ENCODE measurements at regions of chr12 and their contacts with region 1.

Region 1: GRCh38 chr12:120904197-120904773 is at the start of gene SPPL3:
- DNase-seq: peak; percentile 86 to 96 (median 93)
- ATAC-seq: peak; percentile 75
- H3K4me3 ChIP-seq: peak within 1 kb of the TSS; percentile 76 to 82
- H3K4me3 Mint-ChIP-seq: peak within 1 kb of the TSS; percentile 99
- H3K27ac ChIP-seq: peak within 1 kb of the TSS; percentile 66 to 84
- H3K27ac Mint-ChIP-seq: peak within 1 kb of the TSS; percentile 98
- H3K4me1 ChIP-seq: peaks cover 21% of the 10 kb centered on the region
- H3K4me1 Mint-ChIP-seq: peaks cover 32% of the 10 kb centered on the region
- H3K27me3 ChIP-seq: no peaks in the 10 kb centered on the region
- H3K27me3 Mint-ChIP-seq: no peaks in the 10 kb centered on the region
- CTCF ChIP-seq: no peak
- total RNA-seq, gene SPPL3: 42.3 to 42.9 TPM

Region 2: DNA sequence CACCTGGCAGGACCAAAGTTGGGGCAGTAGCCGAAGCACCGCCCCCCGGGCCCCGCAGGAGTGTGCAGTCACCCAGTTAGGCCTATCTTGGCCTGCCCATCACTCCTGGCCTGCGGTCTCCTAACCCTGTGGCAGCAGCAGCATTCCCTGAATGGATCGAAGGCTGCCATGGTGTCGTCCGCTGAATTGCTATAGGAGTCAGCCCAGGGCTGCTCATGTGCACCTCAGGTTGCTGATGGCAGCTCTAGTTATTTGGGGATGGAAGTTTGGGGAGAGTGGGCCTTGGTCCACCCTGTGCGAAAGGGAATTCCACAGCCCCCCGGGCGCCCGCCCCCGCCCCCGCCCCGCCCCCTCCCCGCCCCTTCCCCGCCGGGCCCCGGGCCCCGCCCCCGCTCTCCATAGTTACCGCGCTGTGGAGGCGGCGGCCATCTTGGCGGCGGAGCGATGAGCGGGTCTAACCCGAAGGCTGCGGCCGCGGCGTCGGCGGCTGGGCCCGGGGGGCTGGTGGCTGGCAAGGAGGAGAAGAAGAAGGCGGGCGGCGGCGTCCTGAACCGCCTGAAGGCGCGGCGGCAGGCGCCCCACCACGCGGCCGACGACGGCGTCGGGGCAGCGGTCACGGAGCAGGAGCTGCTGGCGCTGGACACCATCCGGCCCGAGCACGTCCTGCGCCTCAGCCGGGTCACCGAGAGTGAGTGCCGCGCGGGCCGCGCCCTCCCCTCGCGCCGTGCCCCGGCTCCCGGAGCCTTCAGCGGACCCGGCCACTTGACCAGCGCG is 194.1 kb before region 1 on chr12 and contains the start of gene UNC119B:
- CTCF ChIA-PET with region 1: no interaction called
- POLR2A ChIA-PET with region 1: no interaction called
- intact Hi-C with region 1: loop called in 1 of 2 experiments (anchors 10 kb)
- DNase-seq: peak; percentile 38 to 85 (median 77)
- ATAC-seq: peak; percentile 88
- H3K4me3 ChIP-seq: peak within 1 kb of the TSS; percentile 64 to 68
- H3K4me3 Mint-ChIP-seq: peak within 1 kb of the TSS; percentile 93
- H3K27ac ChIP-seq: peak within 1 kb of the TSS; percentile 40 to 70
- H3K27ac Mint-ChIP-seq: peak within 1 kb of the TSS; percentile 89
- H3K4me1 ChIP-seq: peaks cover 22% of the 10 kb centered on the region
- H3K4me1 Mint-ChIP-seq: peaks cover 37% of the 10 kb centered on the region
- H3K27me3 ChIP-seq: no peaks in the 10 kb centered on the region
- H3K27me3 Mint-ChIP-seq: no peaks in the 10 kb centered on the region
- CTCF ChIP-seq: no peak
- total RNA-seq, gene UNC119B: 8.1 to 8.4 TPM

Region 3: GRCh38 chr12:120856980-120857379 is 47.3 kb before region 1 on chr12:
- CTCF ChIA-PET with region 1: no interaction called
- POLR2A ChIA-PET with region 1: no interaction called
- intact Hi-C with region 1: loop called in 1 of 2 experiments (anchors 2 kb)
- DNase-seq: peak in 2 of 9 experiments; percentile 32 to 55
- ATAC-seq: no peak
- H3K4me3 ChIP-seq: no peak overlapping the region
- H3K4me3 Mint-ChIP-seq: no peak overlapping the region
- H3K27ac ChIP-seq: no peak overlapping the region
- H3K27ac Mint-ChIP-seq: peak overlapping the region; percentile 56
- H3K4me1 ChIP-seq: peaks cover 26% of the 10 kb centered on the region
- H3K4me1 Mint-ChIP-seq: peaks cover 63% of the 10 kb centered on the region
- H3K27me3 ChIP-seq: no peaks in the 10 kb centered on the region
- H3K27me3 Mint-ChIP-seq: no peaks in the 10 kb centered on the region
- CTCF ChIP-seq: no peak

Region 4: GRCh38 chr12:121209624-121210572 is 305.6 kb after region 1 on chr12 and contains the start of gene P2RX4:
- CTCF ChIA-PET with region 1: no interaction called
- POLR2A ChIA-PET with region 1: no interaction called
- intact Hi-C with region 1: loop called in 1 of 2 experiments (anchors 5 kb)
- DNase-seq: peak; percentile 72 to 96 (median 88)
- ATAC-seq: peak; percentile 86
- H3K4me3 ChIP-seq: peak within 1 kb of the TSS; percentile 60 to 66
- H3K4me3 Mint-ChIP-seq: peak within 1 kb of the TSS; percentile 78
- H3K27ac ChIP-seq: peak within 1 kb of the TSS; percentile 85 to 86
- H3K27ac Mint-ChIP-seq: peak within 1 kb of the TSS; percentile 92
- H3K4me1 ChIP-seq: peaks cover 16% of the 10 kb centered on the region
- H3K4me1 Mint-ChIP-seq: peaks cover 24% of the 10 kb centered on the region
- H3K27me3 ChIP-seq: no peaks in the 10 kb centered on the region
- H3K27me3 Mint-ChIP-seq: no peaks in the 10 kb centered on the region
- CTCF ChIP-seq: no peak
- total RNA-seq, gene P2RX4: 27.5 to 29.8 TPM

Region 5: GRCh38 chr12:121719926-121720414 is 815.7 kb after region 1 on chr12:
- CTCF ChIA-PET with region 1: no interaction called
- POLR2A ChIA-PET with region 1: no interaction called
- intact Hi-C with region 1: no loop called
- DNase-seq: no peak
- ATAC-seq: no peak
- H3K4me3 ChIP-seq: no peak overlapping the region
- H3K4me3 Mint-ChIP-seq: no peak overlapping the region
- H3K27ac ChIP-seq: no peak overlapping the region
- H3K27ac Mint-ChIP-seq: no peak overlapping the region
- H3K4me1 ChIP-seq: no peaks in the 10 kb centered on the region
- H3K4me1 Mint-ChIP-seq: peaks cover 10% of the 10 kb centered on the region
- H3K27me3 ChIP-seq: no peaks in the 10 kb centered on the region
- H3K27me3 Mint-ChIP-seq: no peaks in the 10 kb centered on the region
- CTCF ChIP-seq: no peak